Aorta (tissue), 5 donors: ENCODE measurements at regions of chrX and their contacts with region 1.

Region 1: GRCh38 chrX:50988649-50989048 is 78.1 kb downstream of the BMP15 start:
- DNase-seq: no peak
- ATAC-seq: no peak
- H3K4me3 ChIP-seq: no peak overlapping the region
- H3K27ac ChIP-seq: no peak overlapping the region
- H3K4me1 ChIP-seq: no peaks in the 10 kb centered on the region
- H3K27me3 ChIP-seq: no peaks in the 10 kb centered on the region

Region 2: DNA sequence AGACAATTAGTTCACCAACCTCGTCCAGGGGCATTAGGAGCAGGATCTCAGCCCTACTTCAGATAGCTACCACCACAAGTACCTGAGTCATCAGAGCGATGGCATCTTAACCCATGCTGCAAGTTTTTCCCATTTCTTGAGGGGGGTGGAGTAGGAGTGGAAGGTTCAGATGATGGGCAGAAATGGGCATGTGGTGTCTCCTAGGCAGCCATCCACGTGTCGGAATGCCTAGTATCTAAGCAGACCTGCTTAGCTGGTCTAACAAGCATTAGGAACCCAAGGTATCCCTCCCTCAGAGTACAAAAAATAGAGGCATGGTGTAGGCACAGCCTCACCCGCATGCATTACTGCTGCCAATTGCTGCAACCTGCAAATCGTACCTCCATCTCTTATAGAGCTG is 358.9 kb before region 1 on chrX:
- intact Hi-C with region 1: no loop called
- DNase-seq: no peak
- ATAC-seq: no peak
- H3K4me3 ChIP-seq: no peak overlapping the region
- H3K27ac ChIP-seq: no peak overlapping the region
- H3K4me1 ChIP-seq: no peaks in the 10 kb centered on the region
- H3K27me3 ChIP-seq: no peaks in the 10 kb centered on the region

Region 3: DNA sequence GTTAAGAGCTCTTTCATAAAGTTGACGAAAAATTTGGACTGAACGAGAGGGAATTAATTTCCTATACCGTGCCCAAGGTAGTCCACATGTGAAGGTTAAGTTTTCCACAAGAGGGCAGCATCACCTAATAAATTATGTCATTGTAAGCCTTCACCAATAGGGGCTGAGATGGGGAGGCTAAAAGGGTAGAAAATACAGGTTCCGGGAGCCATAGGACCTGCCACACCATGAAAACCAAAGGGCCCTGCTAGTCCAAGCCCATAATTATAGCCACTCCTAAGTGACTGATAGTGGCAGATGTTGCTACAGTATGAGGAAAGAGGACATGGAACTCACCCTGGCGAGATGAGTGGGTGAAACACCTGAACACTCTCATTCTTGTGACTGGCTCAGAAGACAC is 296.8 kb before region 1 on chrX:
- intact Hi-C with region 1: loop called (anchors 5 to 10 kb)
- DNase-seq: no peak
- ATAC-seq: no peak
- H3K4me3 ChIP-seq: no peak overlapping the region
- H3K27ac ChIP-seq: no peak overlapping the region
- H3K4me1 ChIP-seq: no peaks in the 10 kb centered on the region
- H3K27me3 ChIP-seq: no peaks in the 10 kb centered on the region

Region 4: DNA sequence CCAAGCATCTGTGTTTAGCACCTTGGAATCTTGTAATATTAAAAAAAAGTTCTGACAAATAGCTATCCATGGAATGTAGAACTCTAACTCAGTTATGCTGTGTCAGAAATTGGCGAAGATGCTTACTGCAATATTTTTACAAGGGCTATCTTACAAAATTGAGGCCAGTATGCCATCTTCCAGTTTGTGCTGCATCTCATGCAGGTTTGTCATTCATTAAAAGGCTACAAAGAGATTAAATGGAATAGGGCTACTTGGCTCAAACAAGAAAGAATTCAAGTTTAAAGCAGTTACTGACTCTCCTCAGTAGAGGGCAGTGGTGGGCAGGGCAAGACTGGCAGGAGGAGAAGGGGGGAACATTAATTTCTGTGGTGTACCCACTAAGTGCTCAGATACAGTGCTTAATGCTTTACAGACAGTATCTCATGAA is 241.2 kb before region 1 on chrX:
- intact Hi-C with region 1: loop called in 1 of 2 experiments (anchors 10 kb)
- DNase-seq: no peak
- ATAC-seq: no peak
- H3K4me3 ChIP-seq: no peak overlapping the region
- H3K27ac ChIP-seq: no peak overlapping the region
- H3K4me1 ChIP-seq: no peaks in the 10 kb centered on the region
- H3K27me3 ChIP-seq: no peaks in the 10 kb centered on the region

Region 5: GRCh38 chrX:51281758-51282318 is 293.2 kb after region 1 on chrX:
- intact Hi-C with region 1: no loop called
- DNase-seq: no peak
- ATAC-seq: no peak
- H3K4me3 ChIP-seq: no peak overlapping the region
- H3K27ac ChIP-seq: no peak overlapping the region
- H3K4me1 ChIP-seq: no peaks in the 10 kb centered on the region
- H3K27me3 ChIP-seq: no peaks in the 10 kb centered on the region